Left colon (tissue), 2 donors: ENCODE measurements at regions of chr6 and their contacts with region 1.

Region 1: DNA sequence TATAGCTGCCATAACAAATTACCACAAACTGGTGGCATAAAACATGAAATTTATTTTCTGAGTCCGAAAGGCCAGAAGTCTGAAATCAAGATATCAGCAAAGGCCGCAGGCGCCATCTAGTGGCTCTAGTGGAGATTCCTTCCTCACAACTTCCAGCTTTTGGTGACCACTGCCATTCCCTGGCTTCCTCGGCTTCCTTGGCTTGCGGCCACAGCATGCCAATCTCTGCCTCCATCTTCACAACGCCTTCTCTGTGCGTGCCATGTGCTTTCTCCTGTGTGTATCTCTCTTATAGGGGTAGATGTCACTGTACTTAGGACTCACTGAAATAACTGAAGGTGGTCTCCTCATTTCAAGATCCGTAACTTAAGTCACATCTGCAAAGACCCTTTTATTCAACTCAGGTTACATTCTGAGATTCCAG is 5.4 kb upstream of the PLAGL1 start:
- DNase-seq: peak; percentile 59 to 87
- ATAC-seq: peak; percentile 71

Region 2: DNA sequence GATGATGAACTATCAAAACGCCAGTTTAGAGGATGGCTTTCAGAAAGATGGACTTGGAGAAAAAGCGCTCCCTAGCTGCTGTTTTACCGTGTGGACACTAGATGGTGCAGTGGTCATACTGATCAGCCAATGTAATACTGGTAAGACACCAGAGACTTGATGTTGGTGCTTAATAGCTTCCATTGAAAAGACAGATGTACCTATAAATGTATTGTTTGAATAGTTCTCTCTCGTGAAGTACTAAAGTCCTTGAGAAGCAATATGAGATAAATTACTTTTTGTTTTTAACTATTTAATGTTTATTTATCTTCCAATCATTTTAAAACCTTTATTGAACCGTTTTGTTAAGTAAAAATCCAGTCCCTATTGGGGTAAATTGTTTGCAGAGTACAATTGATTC is 438.1 kb before region 1 on chr6:
- intact Hi-C with region 1: loop called in 1 of 2 experiments (anchors 5 kb)
- DNase-seq: no peak
- ATAC-seq: peak; percentile 93

Region 3: DNA sequence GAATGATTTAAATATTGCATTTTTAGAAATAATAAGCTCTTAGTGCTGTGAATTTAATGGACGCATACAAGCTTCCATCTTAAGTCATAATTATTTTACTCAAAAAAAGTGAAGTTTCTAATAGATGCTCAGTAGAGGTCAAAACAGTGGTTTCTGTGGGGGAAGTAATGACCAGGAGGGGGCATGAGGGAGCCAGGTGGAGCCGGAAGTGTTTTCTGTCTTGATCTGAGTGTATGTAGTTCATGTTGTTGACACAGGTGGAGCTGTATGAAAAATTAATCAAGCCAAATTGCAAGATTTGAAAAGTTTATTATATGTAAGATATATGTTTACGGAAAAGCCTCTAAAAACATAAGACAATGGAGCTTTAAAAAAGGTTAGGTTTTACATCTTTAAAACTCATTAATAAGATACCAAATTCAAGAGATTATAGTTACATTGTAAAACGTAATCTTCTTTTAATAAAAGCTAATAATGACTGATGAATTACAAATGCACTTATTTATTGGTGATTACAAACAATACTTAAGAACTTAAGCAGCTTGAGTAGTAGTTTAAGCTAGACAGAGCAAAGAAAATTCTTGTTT is 73.4 kb before region 1 on chr6:
- intact Hi-C with region 1: loop called in 1 of 2 experiments (anchors 10 kb)
- DNase-seq: peak in 1 of 2 donors; percentile 63
- ATAC-seq: peak; percentile 93